Mammary epithelial cell (primary cell): ENCODE measurements at regions of chr2 and their contacts with region 1.

Region 1: DNA sequence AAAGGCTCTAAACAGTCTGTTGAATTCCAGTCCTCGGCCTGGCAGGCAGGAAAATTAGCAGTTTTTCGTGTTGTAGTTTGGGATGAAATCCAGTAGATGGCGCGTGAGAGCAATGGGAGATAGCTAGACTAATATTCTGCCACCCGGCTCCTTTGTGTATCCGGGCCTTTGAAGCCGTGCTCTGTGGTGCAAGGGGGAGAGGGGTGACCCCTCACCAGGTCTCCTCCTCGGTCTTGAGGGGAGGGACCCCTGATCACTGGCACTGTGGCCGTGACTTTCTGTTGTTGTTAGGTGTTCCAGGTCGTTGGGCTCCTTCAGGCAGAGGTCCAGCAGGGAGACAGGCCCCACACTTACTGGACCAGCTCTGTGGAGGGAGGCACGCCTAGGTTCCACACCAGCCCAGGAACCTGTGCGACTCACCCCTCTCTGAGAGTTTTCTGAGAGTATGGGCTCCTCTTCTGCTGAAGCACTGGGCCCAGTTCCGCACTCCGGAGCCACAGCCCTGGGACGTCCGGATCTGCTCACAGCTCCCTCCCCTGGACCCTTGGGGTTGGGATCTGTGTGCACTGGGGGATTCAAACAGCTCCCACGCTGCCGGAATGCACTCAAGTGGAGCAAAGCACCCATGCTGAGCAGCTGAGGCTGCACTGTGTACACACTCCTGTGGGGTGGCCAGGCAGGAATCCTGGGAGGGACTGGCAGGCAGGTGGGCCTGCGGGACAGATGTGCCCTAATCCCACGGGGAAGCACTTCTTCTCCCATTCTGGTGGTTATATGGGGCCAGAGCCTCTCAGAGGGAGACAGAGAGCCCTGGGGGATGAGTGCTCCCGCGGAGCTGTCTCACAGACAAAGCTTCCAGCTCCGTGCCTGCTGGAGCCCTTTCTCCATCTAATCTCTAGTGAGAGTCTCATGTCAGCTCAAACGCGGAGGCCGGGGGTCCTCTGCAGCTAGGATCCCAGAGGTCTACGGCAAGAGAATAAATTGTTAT is 8.8 kb downstream of the GKN2 start:
- DNase-seq: peak; percentile 61
- H3K4me3 ChIP-seq: no peak overlapping the region
- H3K27ac ChIP-seq: no peak overlapping the region
- H3K4me1 ChIP-seq: no peaks in the 10 kb centered on the region
- H3K27me3 ChIP-seq: no peaks in the 10 kb centered on the region
- CTCF ChIP-seq: peak; percentile 63 to 84

Region 2: GRCh38 chr2:68889500-68890185 is 54.2 kb before region 1 on chr2:
- CTCF ChIA-PET with region 1: interaction called, 34 read pairs
- dilution Hi-C with region 1: no loop called
- in situ Hi-C with region 1: no loop called
- intact Hi-C with region 1: no loop called
- DNase-seq: no peak
- H3K4me3 ChIP-seq: no peak overlapping the region
- H3K27ac ChIP-seq: no peak overlapping the region
- H3K4me1 ChIP-seq: no peaks in the 10 kb centered on the region
- H3K27me3 ChIP-seq: peaks cover 2% of the 10 kb centered on the region
- CTCF ChIP-seq: no peak